Heart right ventricle (tissue), 16 donors: ENCODE measurements at regions of chr2 and their contacts with region 1.

Region 1: DNA sequence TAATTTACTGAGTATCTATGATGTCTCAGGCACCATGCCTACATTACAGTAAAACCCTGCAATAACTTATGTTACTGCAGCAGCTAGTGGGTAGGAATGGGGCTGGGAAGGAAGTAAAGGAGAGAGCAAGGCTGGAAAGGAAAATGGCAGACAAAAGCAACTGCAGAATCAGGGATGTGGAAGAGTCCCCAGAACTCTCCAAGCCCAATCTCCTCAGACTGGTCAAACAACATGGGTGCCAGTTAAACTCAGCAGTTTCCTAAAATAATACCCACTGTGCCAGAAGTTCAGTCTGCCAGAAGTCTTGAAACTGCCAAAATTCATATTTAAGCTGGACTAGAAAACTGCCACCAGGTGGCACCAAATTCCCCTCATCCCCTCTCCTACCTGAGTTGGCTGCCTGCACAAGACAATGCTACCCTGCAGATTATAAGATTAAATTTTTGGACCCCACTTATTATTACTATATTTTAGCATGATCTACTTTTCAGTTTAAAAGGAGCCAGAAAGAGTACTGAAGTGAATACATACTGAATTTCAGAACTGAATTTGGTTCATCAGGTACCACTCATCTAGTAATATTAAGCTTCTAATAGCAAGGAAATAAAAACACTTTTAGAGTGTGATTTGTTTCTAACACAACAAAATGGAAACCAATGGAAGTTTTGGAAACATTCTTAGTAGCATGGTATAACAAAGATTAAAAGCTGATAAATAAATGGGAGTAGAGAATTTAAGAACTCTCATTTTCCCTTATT is 86.8 kb upstream of the DNER start:
- DNase-seq: peak in 1 of 2 donors; percentile 60
- ATAC-seq: peak in 7 of 8 donors; percentile 23 to 70 (median 59)
- H3K4me3 ChIP-seq: no peak overlapping the region
- H3K27ac ChIP-seq: peak overlapping the region in 1 of 10 donors; percentile 53
- H3K4me1 ChIP-seq: peaks cover 0 to 31% (median 19%) of the 10 kb centered on the region in 9 donors
- H3K27me3 ChIP-seq: no peaks in the 10 kb centered on the region
- CTCF ChIP-seq: peak; percentile 55 to 85 (median 75)

Region 2: GRCh38 chr2:229910832-229911412 is 109.7 kb after region 1 on chr2:
- intact Hi-C with region 1: loop called in 3 of 10 experiments (anchors 5 to 10 kb)
- DNase-seq: no peak
- ATAC-seq: peak in 1 of 8 donors; percentile 51
- H3K4me3 ChIP-seq: no peak overlapping the region
- H3K27ac ChIP-seq: no peak overlapping the region
- H3K4me1 ChIP-seq: peaks cover 2 to 86% (median 63%) of the 10 kb centered on the region in 9 donors
- H3K27me3 ChIP-seq: no peaks in the 10 kb centered on the region
- CTCF ChIP-seq: peak in 6 of 9 donors; percentile 9 to 50 (median 42)

Region 3: DNA sequence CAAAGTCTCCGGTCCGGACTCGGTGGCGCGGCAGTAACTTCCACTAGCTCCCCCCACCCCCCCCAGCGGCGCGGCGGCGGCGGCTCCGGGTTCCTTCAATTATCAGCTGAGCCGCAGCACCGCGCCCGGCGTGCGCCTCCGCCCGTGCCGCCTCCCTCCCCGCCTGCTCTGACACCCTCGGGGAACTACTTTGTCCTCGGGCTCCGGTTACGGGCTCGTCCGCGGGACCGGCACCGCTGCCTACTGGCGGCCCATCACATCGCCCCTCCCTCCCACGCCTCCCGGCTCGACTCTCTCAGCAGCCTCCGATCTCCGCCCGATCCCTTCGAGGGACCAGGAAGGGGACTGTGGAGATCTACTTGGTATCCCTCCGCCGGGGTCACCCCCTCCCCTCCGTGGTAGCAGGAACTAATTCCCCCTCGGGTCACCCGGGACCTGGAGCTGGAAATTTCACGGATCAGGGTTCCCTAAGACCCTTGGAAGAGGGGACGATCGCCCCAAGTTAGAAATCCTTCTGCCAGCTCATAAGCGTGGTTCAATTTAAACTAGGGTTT is 120.8 kb after region 1 on chr2 and contains the start of gene TRIP12:
- intact Hi-C with region 1: loop called (anchors 5 to 10 kb)
- DNase-seq: peak; percentile 89 to 95
- ATAC-seq: peak; percentile 90 to 96 (median 94)
- H3K4me3 ChIP-seq: peak within 1 kb of the TSS; percentile 55 to 94 (median 81)
- H3K27ac ChIP-seq: peak within 1 kb of the TSS; percentile 90 to 99 (median 98)
- H3K4me1 ChIP-seq: peaks cover 0 to 46% (median 30%) of the 10 kb centered on the region in 9 donors
- H3K27me3 ChIP-seq: no peaks in the 10 kb centered on the region
- CTCF ChIP-seq: no peak
- total RNA-seq, gene TRIP12: 152 to 247 (median 202) TPM